Calu3 (cell line): ENCODE measurements at regions of chr3 and their contacts with region 1.

Region 1: GRCh38 chr3:149886957-149887356 is 73.9 kb downstream of the RNF13 start:
- DNase-seq: peak; percentile 7
- H3K4me3 Mint-ChIP-seq: no peak overlapping the region
- H3K27ac Mint-ChIP-seq: no peak overlapping the region
- H3K4me1 Mint-ChIP-seq: peaks cover 22% of the 10 kb centered on the region
- H3K27me3 Mint-ChIP-seq: no peaks in the 10 kb centered on the region
- CTCF ChIP-seq: no peak

Region 2: DNA sequence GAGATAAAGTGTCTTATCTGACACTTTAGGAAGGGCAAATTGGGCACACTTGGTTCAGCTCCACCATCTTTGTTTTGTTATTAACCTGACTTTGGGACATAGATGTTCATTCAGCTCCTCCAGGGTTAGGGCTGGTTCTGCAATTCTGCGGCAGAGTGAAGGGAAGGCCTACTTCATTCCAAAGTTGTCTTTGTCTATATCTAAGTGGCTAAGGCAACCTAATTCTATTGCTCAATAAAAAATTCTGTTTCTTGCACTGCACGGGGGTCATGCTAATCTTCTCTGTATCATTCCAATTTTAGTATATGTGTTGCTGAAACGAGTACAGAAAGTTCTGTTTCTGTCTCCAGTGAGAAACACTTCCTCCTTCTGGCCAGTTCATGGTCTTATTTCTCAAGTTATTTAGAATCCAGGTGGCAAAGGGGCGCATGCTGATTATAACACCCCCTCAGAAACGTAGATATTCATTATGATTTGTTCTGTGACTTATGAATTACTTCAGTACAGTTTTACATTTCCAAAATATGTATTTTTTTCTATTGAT is 30.2 kb after region 1 on chr3:
- CTCF ChIA-PET with region 1: no interaction called
- intact Hi-C with region 1: loop called (anchors 1 kb)
- DNase-seq: no peak
- H3K4me3 Mint-ChIP-seq: no peak overlapping the region
- H3K27ac Mint-ChIP-seq: no peak overlapping the region
- H3K4me1 Mint-ChIP-seq: no peaks in the 10 kb centered on the region
- H3K27me3 Mint-ChIP-seq: no peaks in the 10 kb centered on the region
- CTCF ChIP-seq: no peak